Heart left ventricle (tissue), 16 donors: ENCODE measurements at regions of chr2 and their contacts with region 1.

Region 1: DNA sequence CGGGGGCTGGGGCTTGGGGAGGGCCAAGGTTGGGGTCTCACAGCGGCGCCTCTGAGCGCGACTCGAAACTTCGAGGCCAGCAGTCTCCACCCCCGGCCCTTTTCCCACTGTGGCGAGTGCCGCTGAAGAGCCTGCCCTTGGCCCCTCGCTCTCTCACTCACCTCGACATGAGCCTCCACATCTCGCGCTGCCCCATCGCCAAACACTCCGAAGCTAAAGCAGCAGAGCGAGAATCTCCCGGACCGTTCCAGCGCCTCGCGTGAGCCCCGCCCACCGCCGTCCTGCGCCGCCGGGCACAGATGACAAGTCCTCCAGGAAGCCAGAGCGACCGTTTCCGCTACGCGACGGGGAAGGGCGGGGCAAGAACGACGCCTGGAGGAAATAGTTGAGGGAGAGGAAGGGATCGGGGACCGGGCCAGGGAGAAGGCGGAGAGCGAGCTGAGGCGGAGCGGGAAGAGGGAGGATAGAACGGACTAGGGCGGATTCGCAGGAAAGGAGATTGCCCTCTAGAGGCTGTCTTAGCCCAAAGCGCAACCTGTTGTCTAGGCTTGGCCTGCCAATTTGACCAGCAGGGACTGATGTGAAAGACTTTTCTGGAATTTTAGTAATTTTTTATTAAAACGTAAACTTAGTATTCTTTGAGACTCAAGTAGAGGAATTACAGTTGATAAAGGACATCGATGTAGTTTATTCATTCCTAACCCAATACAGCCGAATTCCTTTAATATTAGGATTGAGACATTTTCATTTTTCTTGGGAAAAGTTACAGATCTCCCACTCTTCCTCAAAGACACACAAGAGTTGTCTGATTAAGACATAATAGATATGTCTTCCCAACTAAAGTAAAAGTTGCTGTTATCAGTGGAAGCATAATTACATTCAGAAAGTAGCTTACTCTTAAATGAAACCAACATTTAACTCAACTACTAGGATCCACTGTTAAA is at the start of gene HIBCH:
- DNase-seq: peak; percentile 98 to 99 (median 99)
- ATAC-seq: peak; percentile 97 to 99 (median 99)
- H3K4me3 ChIP-seq: peak within 1 kb of the TSS; percentile 65 to 86 (median 74)
- H3K27ac ChIP-seq: peak within 1 kb of the TSS; percentile 42 to 92 (median 86)
- H3K4me1 ChIP-seq: peaks cover 0 to 25% (median 14%) of the 10 kb centered on the region in 12 donors
- H3K27me3 ChIP-seq: no peaks in the 10 kb centered on the region
- CTCF ChIP-seq: peak; percentile 58 to 96 (median 74)
- POLR2A ChIP-seq: peak in 1 of 2 donors; percentile 66
- total RNA-seq, gene HIBCH: 7.7 to 25.3 (median 23.2) TPM

Region 2: GRCh38 chr2:190159453-190159852 is 160.4 kb before region 1 on chr2:
- intact Hi-C with region 1: no loop called
- DNase-seq: peak in 4 of 5 donors; percentile 28 to 42 (median 36)
- ATAC-seq: peak; percentile 82 to 98 (median 97)
- H3K4me3 ChIP-seq: peak overlapping the region in 1 of 12 donors; percentile 17
- H3K27ac ChIP-seq: peak overlapping the region in 6 of 12 donors; percentile 3 to 45 (median 24)
- H3K4me1 ChIP-seq: peaks cover 0 to 5% (median 0%) of the 10 kb centered on the region in 12 donors
- H3K27me3 ChIP-seq: no peaks in the 10 kb centered on the region
- CTCF ChIP-seq: no peak
- POLR2A ChIP-seq: no peak

Region 3: GRCh38 chr2:190180313-190181122 is 139.3 kb before region 1 on chr2:
- intact Hi-C with region 1: loop called in 1 of 10 experiments (anchors 10 kb)
- DNase-seq: peak; percentile 73 to 88 (median 83)
- ATAC-seq: peak; percentile 84 to 93 (median 92)
- H3K4me3 ChIP-seq: peak overlapping the region; percentile 63 to 87 (median 71)
- H3K27ac ChIP-seq: peak overlapping the region; percentile 83 to 97 (median 94)
- H3K4me1 ChIP-seq: peaks cover 0 to 50% (median 12%) of the 10 kb centered on the region in 12 donors
- H3K27me3 ChIP-seq: no peaks in the 10 kb centered on the region
- CTCF ChIP-seq: peak; percentile 30 to 67 (median 54)
- POLR2A ChIP-seq: peak in 1 of 2 donors; percentile 37

Region 4: GRCh38 chr2:190369635-190370034 is 49.8 kb after region 1 on chr2:
- intact Hi-C with region 1: loop called in 7 of 10 experiments (anchors 5 to 10 kb)
- DNase-seq: no peak
- ATAC-seq: no peak
- H3K4me3 ChIP-seq: no peak overlapping the region
- H3K27ac ChIP-seq: no peak overlapping the region
- H3K4me1 ChIP-seq: no peaks in the 10 kb centered on the region
- H3K27me3 ChIP-seq: no peaks in the 10 kb centered on the region
- CTCF ChIP-seq: no peak
- POLR2A ChIP-seq: no peak